OCI-LY7 (cell line): ENCODE measurements at regions of chr11 and their contacts with region 1.

Region 1: GRCh38 chr11:111982019-111982464 is 43.2 kb upstream of the DLAT start:
- DNase-seq: peak; percentile 77
- H3K4me3 ChIP-seq: no peak overlapping the region
- H3K27ac ChIP-seq: no peak overlapping the region
- H3K4me1 ChIP-seq: peaks cover 3% of the 10 kb centered on the region
- CTCF ChIP-seq: peak; percentile 87

Region 2: DNA sequence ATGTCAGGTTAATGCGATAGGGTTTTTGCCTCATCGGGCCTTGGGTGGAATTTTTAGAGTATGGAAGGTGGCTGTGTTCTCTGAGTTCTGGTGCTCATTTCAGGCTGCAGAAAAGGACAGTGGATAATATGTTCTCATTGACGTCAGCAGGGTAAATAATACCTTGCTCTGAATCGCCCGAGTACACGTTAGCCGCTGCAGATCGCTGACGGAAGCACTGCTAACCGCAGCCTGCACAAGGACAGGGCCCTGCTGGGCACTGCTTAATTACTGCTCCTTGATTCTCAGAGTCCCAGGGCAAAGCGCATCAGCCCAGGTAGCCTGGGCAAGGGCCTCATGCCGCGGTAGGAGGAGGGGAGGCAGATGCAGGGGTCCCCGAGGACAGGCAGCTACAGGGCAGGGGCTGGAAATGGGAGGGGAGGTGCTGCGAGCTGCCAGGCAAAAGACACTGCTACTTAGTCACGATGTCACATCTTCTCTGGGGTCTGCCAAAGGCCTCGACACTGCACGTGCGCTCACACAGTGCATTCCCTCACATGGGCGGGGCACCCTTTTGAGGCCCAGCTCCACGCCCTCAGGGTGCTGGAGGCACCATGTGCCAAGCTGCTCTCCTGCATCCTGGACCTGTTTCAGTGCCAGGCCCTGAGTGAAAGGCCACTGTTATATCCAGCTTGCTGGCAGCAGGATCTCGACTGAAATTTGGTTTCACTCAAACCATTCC is 251.0 kb before region 1 on chr11:
- CTCF ChIA-PET with region 1: no interaction called
- POLR2A ChIA-PET with region 1: no interaction called
- intact Hi-C with region 1: no loop called
- DNase-seq: no peak
- H3K4me3 ChIP-seq: no peak overlapping the region
- H3K27ac ChIP-seq: no peak overlapping the region
- H3K4me1 ChIP-seq: no peaks in the 10 kb centered on the region
- CTCF ChIP-seq: no peak

Region 3: DNA sequence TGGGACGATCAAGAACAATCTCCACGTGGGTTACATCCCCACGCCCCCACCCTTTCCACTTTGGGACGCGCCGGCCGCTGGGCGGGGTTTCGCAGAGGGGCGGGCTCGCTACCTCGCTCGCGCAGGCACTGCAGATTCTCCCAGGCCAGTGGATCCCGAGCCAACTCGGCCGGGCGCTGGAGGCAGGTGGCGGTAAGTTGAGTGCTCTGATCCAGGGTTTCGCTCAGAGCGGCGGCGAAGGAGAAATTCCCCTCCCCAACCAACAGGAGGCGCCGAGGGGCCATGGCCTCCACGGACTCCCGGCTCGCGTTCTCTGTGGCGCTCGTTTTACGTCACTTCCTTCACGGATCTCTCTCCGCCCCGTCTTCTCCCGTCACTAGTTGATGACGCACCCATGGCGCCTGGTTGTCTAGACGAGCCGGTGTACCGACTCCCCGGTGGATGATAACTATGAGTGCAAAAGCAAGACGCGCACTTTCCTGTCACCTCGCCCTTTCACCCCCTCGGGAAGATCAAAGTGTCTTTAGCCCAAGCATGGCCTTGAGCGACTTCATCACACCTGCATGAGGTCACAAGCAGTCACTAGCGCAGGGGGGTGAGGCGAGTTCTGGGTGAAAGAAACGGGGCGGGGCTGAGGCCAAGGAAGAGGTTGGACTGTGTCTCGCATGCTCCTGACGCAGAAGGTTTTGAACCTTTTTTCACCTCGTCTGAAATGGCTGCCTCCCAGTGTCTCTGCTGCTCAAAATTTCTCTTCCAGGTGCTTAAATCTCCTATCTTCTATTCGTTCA is 103.0 kb before region 1 on chr11 and contains the starts of genes CFAP68 and FDXACB1:
- CTCF ChIA-PET with region 1: no interaction called
- POLR2A ChIA-PET with region 1: interaction called, 5 read pairs
- intact Hi-C with region 1: loop called (anchors 2 kb)
- DNase-seq: peak; percentile 98
- H3K4me3 ChIP-seq: peak within 1 kb of the TSS; percentile 75
- H3K27ac ChIP-seq: peak within 1 kb of the TSS; percentile 72
- H3K4me1 ChIP-seq: peaks cover 12% of the 10 kb centered on the region
- CTCF ChIP-seq: peak; percentile 86
- total RNA-seq, gene CFAP68: 14.8 and 17.3 TPM in 2 replicates
- total RNA-seq, gene FDXACB1: 4.2 and 6.2 TPM in 2 replicates

Region 4: DNA sequence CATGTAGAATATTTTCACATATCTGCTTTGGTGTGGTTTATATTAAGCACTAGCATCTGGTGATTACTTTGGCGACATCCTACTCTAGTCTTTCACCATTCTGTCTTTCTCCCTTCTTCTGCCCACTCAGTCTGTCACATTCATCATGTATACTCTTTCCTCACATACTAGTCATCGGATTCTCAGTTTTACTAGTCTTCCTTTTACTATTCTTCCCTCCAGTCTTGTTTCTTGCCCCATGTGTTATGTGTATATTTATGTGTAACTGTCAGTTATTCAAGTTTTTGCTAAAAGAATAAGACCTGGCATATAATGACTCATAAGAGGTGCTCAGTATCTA is 49.5 kb before region 1 on chr11:
- CTCF ChIA-PET with region 1: interaction called, 20 read pairs
- POLR2A ChIA-PET with region 1: interaction called, 11 read pairs
- intact Hi-C with region 1: loop called (anchors 1 kb)
- DNase-seq: no peak
- H3K4me3 ChIP-seq: no peak overlapping the region
- H3K27ac ChIP-seq: no peak overlapping the region
- H3K4me1 ChIP-seq: peaks cover 26% of the 10 kb centered on the region
- CTCF ChIP-seq: no peak

Region 5: DNA sequence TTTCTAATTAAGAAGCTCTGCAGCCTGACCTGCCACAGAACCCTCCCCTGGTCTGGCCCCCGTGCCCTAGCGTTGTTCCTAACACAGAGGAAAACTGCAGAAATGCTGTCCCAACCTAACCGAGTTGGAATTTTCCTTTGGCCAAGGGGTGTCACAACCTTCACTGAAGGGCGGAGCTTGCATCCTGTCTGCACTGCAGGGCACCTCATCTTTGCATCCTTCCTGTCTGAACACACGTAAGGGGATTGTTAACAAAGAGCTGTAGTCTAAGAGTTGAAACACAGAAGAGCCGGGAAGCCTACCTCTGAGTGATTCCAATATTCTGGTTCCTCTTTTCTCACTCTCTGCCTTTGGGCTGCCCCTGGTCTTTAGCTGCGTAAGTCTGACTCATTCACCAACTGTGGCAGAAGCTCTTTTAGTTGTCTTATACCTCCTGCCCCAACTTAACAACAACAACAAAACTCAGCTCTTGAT is 43.3 kb before region 1 on chr11:
- CTCF ChIA-PET with region 1: interaction called, 12 read pairs
- POLR2A ChIA-PET with region 1: interaction called, 11 read pairs
- intact Hi-C with region 1: no loop called
- DNase-seq: peak; percentile 67
- H3K4me3 ChIP-seq: peak overlapping the region; percentile 70
- H3K27ac ChIP-seq: peak overlapping the region; percentile 39
- H3K4me1 ChIP-seq: peaks cover 42% of the 10 kb centered on the region
- CTCF ChIP-seq: no peak